GM12878 (cell line): ENCODE measurements at regions of chr10 and their contacts with region 1.

Region 1: GRCh38 chr10:103451831-103452505 is at the start of gene CALHM2:
- DNase-seq: no peak
- ATAC-seq: peak; percentile 84
- H3K4me3 ChIP-seq: peak within 1 kb of the TSS; percentile 98
- H3K27ac ChIP-seq: peak within 1 kb of the TSS; percentile 83
- H3K4me1 ChIP-seq: peaks cover 22% of the 10 kb centered on the region
- H3K27me3 ChIP-seq: no peaks in the 10 kb centered on the region
- CTCF ChIP-seq: 0 out of 6 replicates have a peak, but pooled peaks of 1 of the 3 experiments have one; percentile 11
- EP300 ChIP-seq: no peak
- POLR2A ChIP-seq: peak; percentile 72
- RAD21 ChIP-seq: 0 out of 2 replicates have a peak, but pooled peaks have one; percentile 2
- polyA plus RNA-seq, gene CALHM2: 0.60 to 1.9 TPM

Region 2: GRCh38 chr10:103481974-103482531 is 30.1 kb after region 1 on chr10:
- CTCF ChIA-PET with region 1: interaction called, 163 read pairs
- POLR2A ChIA-PET with region 1: interaction called, 35 read pairs
- RAD21 ChIA-PET with region 1: interaction called, 73 read pairs
- SMC1A ChIA-PET with region 1: interaction called, 124 read pairs
- in situ Hi-C with region 1: no loop called
- intact Hi-C with region 1: loop called (anchors 5 kb)
- DNase-seq: no peak
- ATAC-seq: peak; percentile 93
- H3K4me3 ChIP-seq: no peak overlapping the region
- H3K27ac ChIP-seq: no peak overlapping the region
- H3K4me1 ChIP-seq: no peaks in the 10 kb centered on the region
- H3K27me3 ChIP-seq: no peaks in the 10 kb centered on the region
- CTCF ChIP-seq: peak; percentile 67 to 82 (median 76)
- EP300 ChIP-seq: no peak
- POLR2A ChIP-seq: no peak
- RAD21 ChIP-seq: peak; percentile 83

Region 3: GRCh38 chr10:103645141-103646054 is 193.4 kb after region 1 on chr10:
- CTCF ChIA-PET with region 1: no interaction called
- POLR2A ChIA-PET with region 1: no interaction called
- RAD21 ChIA-PET with region 1: no interaction called
- SMC1A ChIA-PET with region 1: no interaction called
- in situ Hi-C with region 1: no loop called
- intact Hi-C with region 1: no loop called
- DNase-seq: no peak
- ATAC-seq: no peak
- H3K4me3 ChIP-seq: no peak overlapping the region
- H3K27ac ChIP-seq: no peak overlapping the region
- H3K4me1 ChIP-seq: no peaks in the 10 kb centered on the region
- H3K27me3 ChIP-seq: no peaks in the 10 kb centered on the region
- CTCF ChIP-seq: no peak
- EP300 ChIP-seq: no peak
- POLR2A ChIP-seq: no peak
- RAD21 ChIP-seq: no peak